Body of pancreas (tissue), 4 donors: ENCODE measurements at regions of chr17 and their contacts with region 1.

Region 1: DNA sequence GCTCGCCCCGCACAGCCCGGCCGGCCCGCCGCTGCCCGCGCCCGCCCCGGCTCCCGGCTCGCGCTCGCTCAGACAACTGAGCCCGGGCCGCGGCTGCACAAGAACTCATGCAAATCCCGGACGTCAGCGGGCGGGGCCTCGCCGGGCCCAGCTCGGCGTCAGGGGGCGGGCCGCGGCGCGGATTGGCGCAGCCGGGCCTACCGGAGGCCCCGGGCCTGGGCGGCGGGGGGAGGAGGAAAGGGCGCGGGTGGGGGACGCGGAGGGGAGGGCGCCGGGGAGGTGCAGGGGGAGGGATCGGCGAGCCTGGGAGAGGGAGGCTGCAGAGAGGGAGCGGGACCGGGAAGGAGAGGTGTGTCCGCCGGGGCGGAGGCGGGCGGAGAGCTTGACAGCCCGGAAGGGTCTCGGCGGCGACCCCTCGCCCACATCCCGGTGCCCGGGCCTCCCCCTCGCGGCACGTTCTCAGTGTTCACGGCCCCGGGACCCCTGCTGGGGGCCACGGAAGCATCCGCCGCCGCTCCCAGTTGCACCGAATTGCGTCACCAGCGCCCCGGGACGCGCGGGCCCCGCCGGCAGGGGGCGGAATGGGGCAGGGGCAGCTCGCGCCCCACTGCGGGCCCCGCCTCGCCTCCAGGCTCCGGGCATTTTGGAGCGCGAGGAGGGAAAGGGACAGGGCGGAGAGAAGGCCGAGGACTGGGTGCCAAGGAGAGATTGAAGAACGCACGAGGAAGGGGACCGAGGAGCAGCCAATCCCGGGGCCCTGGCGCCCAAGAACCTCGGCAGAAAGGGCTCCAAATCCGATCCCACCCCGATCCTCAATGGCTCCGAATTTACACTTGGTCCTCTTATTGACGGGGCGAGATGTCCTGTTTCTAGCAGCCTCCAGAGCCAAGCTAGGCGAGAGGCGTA is at the start of gene CBX4:
- DNase-seq: peak; percentile 96 to 98 (median 97)
- ATAC-seq: peak; percentile 78
- H3K4me3 ChIP-seq: peak within 1 kb of the TSS; percentile 63 to 93
- H3K27ac ChIP-seq: peak within 1 kb of the TSS; percentile 93 to 98 (median 96)
- H3K4me1 ChIP-seq: peaks cover 84% of the 10 kb centered on the region
- H3K27me3 ChIP-seq: peaks cover 0 to 34% of the 10 kb centered on the region in 2 donors
- CTCF ChIP-seq: peak; percentile 68 to 81 (median 71)
- POLR2A ChIP-seq: peak; percentile 66 to 80 (median 70)
- total RNA-seq, gene CBX4: 15.6 to 17.8 TPM

Region 2: GRCh38 chr17:79796763-79797491 is 42.7 kb before region 1 on chr17 and contains the start of gene CBX8:
- intact Hi-C with region 1: loop called (anchors 10 kb)
- DNase-seq: peak; percentile 100
- ATAC-seq: peak; percentile 92
- H3K4me3 ChIP-seq: peak within 1 kb of the TSS; percentile 44 to 73
- H3K27ac ChIP-seq: peak within 1 kb of the TSS; percentile 74 to 91 (median 82)
- H3K4me1 ChIP-seq: peaks cover 48% of the 10 kb centered on the region
- H3K27me3 ChIP-seq: peaks cover 5 to 40% of the 10 kb centered on the region in 2 donors
- CTCF ChIP-seq: peak in 3 of 7 experiments; percentile 14 to 56 (median 37)
- POLR2A ChIP-seq: peak in 2 of 3 donors; percentile 55 to 58
- total RNA-seq, gene CBX8: 1.6 to 1.8 TPM

Region 3: DNA sequence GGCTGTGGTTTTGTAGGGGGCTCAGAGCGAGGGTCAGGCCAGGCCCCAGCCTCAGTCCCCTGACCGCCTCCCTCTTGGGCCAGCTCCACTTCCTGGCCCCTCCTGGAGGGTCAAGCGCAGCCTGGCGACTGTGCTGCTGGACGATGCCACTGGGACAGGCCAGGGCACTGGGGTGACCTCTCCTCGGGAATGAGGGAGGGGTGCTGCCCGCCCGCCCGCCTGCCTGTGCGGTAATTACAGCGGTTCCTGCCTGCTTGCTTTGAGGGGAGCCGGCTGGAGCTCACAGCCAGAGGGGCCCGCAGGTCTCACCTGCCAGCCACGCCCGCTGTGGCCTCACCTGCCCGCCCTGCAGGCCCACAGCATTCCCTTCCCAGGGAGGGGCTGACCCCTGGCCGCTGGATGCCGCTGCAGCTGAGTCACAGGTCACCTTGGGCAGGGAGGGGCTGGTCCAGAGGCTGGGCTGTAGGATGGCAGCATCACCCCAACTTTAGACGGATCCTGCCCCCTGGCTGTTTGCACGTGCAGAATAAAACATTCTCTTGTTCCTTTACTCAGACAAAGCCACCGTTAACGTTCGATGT is 76.3 kb after region 1 on chr17:
- intact Hi-C with region 1: no loop called
- DNase-seq: peak; percentile 52 to 75 (median 71)
- ATAC-seq: peak; percentile 15
- H3K4me3 ChIP-seq: no peak overlapping the region
- H3K27ac ChIP-seq: peak overlapping the region in 3 of 4 donors; percentile 42 to 55 (median 48)
- H3K4me1 ChIP-seq: peaks cover 40% of the 10 kb centered on the region
- H3K27me3 ChIP-seq: no peaks in the 10 kb centered on the region
- CTCF ChIP-seq: peak in 4 of 7 experiments; percentile 37 to 50 (median 48)
- POLR2A ChIP-seq: peak in 1 of 3 donors; percentile 31

Region 4: GRCh38 chr17:80035943-80036714 is 196.5 kb after region 1 on chr17 and contains the start of gene CCDC40:
- intact Hi-C with region 1: no loop called
- DNase-seq: peak; percentile 86 to 90 (median 89)
- ATAC-seq: peak; percentile 90
- H3K4me3 ChIP-seq: peak within 1 kb of the TSS; percentile 62 to 93
- H3K27ac ChIP-seq: peak within 1 kb of the TSS; percentile 86 to 97 (median 94)
- H3K4me1 ChIP-seq: peaks cover 30% of the 10 kb centered on the region
- H3K27me3 ChIP-seq: no peaks in the 10 kb centered on the region
- CTCF ChIP-seq: peak in 1 of 7 experiments; percentile 9
- POLR2A ChIP-seq: peak; percentile 24 to 76 (median 76)
- total RNA-seq, gene CCDC40: 2.9 to 13.5 TPM